AG04450 (cell line): ENCODE measurements at regions of chr3 and their contacts with region 1.

Region 1: DNA sequence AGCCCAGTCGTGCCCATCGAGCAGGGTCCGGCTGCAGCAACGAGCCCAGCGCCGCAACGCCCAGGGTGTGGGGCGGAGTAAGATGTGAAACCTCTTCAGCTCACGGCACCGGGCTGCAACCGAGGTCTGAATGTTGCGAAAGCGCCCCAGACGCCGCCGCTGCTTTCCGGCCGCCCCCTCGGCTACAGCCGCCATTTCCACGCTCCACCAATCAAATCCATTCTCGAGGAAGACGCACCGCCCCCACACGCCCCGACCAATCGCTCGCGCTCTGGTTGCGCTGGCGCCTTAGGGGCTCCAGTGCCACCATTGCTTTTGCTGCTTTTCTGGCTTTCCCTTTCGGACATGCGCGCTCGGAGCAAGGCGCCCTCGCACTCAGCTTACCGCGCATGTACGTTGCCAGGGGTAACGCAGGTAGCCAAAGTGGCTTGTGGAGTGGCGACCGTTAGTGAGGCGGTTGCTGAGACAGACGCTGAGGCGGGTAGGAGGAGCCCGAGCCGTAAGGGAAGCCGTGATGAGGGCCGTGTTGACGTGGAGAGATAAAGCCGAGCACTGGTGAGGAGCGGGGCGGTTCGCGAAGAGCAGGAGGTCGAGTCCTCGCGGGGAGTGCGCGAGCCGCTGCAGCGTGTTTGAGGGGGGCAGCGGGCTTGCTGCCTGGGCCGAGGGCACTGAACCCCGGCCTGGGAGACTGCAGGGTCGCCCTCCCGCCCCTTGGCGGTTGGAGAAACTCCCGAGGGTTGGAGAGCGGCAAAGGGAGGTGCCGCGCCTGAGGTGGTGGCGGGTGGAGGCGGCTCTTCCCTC is at the starts of genes IFT122 and MBD4:
- DNase-seq: peak; percentile 99
- H3K4me3 ChIP-seq: peak within 1 kb of the TSS; percentile 97
- H3K27ac ChIP-seq: peak within 1 kb of the TSS; percentile 95
- H3K27me3 ChIP-seq: no peaks in the 10 kb centered on the region
- CTCF ChIP-seq: no peak
- polyA plus RNA-seq, gene IFT122: 14.0 and 14.3 TPM in 2 replicates
- polyA plus RNA-seq, gene MBD4: 26.2 and 35.6 TPM in 2 replicates

Region 2: GRCh38 chr3:129016356-129016719 is 423.7 kb before region 1 on chr3:
- CTCF ChIA-PET with region 1: no interaction called
- POLR2A ChIA-PET with region 1: no interaction called
- DNase-seq: no peak
- H3K4me3 ChIP-seq: no peak overlapping the region
- H3K27ac ChIP-seq: no peak overlapping the region
- H3K27me3 ChIP-seq: no peaks in the 10 kb centered on the region
- CTCF ChIP-seq: no peak

Region 3: DNA sequence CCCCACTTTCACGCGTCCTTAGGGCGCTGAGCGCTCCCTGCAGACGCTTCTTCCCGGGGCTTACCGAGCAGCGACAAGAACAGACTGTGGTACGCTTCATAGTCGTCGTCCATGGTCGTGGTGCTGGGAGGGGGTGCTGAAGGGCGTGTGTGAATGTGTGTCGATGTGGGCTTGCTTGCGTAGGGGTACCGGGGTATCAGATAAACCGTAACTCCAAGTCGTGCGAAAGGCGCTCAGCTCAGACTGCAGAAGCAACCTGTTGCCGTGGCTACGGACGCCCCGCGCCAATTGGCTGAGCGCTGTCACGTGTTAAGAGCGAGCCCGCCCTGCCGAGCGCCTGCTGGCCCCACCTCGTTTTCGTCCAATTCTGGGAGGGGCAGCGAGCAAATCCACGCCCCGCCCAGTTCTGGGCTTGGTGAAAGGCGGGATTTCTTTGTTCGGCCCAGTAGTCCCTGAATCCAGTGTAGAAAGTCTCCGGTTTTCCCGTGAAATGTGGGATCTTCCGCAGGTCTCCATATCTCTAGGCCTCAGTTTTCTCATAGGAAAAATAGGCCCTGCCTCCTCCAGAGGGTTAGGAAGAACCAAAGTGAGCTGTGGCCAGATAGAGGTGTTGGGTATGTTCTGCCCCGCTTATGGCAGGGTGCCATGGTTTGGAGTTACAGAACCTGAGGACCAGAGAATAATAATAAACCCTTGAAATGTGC is 11.5 kb before region 1 on chr3 and contains the start of gene EFCAB12:
- CTCF ChIA-PET with region 1: interaction called, 3 read pairs
- POLR2A ChIA-PET with region 1: interaction called, 34 read pairs
- DNase-seq: peak; percentile 79
- H3K4me3 ChIP-seq: peak within 1 kb of the TSS; percentile 76
- H3K27ac ChIP-seq: no peak within 1 kb of the TSS
- H3K27me3 ChIP-seq: peaks cover 3% of the 10 kb centered on the region
- CTCF ChIP-seq: no peak
- polyA plus RNA-seq, gene EFCAB12: 0.07 and 0.19 TPM in 2 replicates

Region 4: DNA sequence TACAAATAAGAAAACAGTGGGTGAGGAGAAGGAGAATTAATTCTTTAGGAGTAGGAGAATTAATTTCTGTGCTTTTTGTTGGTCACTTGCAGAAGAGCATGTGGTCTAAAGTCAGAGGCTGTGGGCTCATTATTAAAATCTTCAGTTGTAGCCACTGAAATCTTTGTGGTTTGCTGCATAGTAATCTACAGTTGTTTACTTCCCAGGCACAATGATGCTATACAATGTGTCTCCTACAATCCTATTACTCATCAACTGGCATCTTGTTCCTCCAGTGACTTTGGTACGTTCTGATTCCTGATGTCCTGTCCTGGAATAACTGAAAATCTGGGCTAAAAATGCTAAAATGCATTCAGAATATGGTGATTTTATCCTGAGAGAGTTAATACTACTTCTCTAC is 21.0 kb after region 1 on chr3:
- CTCF ChIA-PET with region 1: interaction called, 4 read pairs
- POLR2A ChIA-PET with region 1: interaction called, 10 read pairs
- DNase-seq: peak; percentile 18
- H3K4me3 ChIP-seq: no peak overlapping the region
- H3K27ac ChIP-seq: no peak overlapping the region
- H3K27me3 ChIP-seq: no peaks in the 10 kb centered on the region
- CTCF ChIP-seq: no peak

Region 5: GRCh38 chr3:129633751-129634392 is 193.9 kb after region 1 on chr3:
- CTCF ChIA-PET with region 1: no interaction called
- POLR2A ChIA-PET with region 1: no interaction called
- DNase-seq: no peak
- H3K4me3 ChIP-seq: no peak overlapping the region
- H3K27ac ChIP-seq: no peak overlapping the region
- H3K27me3 ChIP-seq: no peaks in the 10 kb centered on the region
- CTCF ChIP-seq: no peak